Breast epithelium (tissue), 4 donors: ENCODE measurements at regions of chr16 and their contacts with region 1.

Region 1: DNA sequence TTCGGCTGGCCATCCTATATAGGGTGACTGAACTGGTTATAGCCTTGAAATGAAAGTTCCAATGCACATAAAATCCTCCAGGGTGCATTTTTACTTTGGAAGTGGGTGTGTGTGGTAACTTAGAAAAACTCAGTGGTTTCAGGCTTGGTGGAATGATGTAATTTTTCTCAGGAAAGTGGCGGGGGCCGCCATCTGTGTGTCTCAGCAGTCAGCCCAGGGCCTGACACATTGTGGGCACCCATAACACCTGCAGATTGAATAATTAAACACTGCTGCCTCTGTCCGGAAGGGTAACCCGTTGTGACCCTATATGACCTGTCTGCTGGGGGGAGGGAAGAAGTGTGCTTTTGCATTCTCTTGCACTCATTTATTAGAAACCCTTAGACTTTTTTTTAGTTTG is 2.2 kb upstream of the PDP2 start:
- DNase-seq: no peak
- H3K4me3 ChIP-seq: no peak overlapping the region
- H3K27ac ChIP-seq: no peak overlapping the region
- H3K4me1 ChIP-seq: no peaks in the 10 kb centered on the region
- H3K27me3 ChIP-seq: no peaks in the 10 kb centered on the region
- CTCF ChIP-seq: no peak
- POLR2A ChIP-seq: no peak

Region 2: DNA sequence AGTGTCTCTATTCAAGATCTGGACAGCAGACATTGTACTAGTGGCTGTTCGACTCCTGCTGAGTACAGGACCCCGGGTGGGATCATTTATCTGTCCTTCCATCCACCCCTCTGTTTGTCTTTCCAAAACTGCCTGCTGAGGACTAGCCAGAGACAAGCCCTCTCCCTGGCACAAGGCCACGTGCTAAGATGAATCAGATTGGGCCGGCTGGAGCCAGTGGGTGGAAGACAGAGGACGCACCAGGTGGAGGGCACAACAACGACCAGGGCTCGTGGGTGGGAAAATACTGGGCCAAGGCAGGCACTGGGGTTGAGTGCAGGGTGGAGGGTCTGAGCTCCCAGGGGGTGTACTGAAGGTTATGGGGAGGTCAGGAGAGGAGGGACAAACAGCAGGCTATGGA is 35.3 kb before region 1 on chr16:
- intact Hi-C with region 1: loop called (anchors 1 kb)
- DNase-seq: no peak
- H3K4me3 ChIP-seq: no peak overlapping the region
- H3K27ac ChIP-seq: no peak overlapping the region
- H3K4me1 ChIP-seq: peaks cover 4 to 6% of the 10 kb centered on the region in 2 donors
- H3K27me3 ChIP-seq: peaks cover 0 to 22% of the 10 kb centered on the region in 2 donors
- CTCF ChIP-seq: no peak
- POLR2A ChIP-seq: no peak